AG04449 (cell line): ENCODE measurements at regions of chr3 and their contacts with region 1.

Region 1: GRCh38 chr3:150106740-150107428 is 136.2 kb upstream of the PFN2 start:
- DNase-seq: peak; percentile 98
- H3K4me3 ChIP-seq: no peak overlapping the region
- CTCF ChIP-seq: no peak

Region 2: GRCh38 chr3:150146991-150147761 is 40.3 kb after region 1 on chr3:
- CTCF ChIA-PET with region 1: no interaction called
- POLR2A ChIA-PET with region 1: interaction called, 16 read pairs
- DNase-seq: peak; percentile 69
- H3K4me3 ChIP-seq: peak overlapping the region; percentile 13; the same call in 1 of the 2 replicates
- CTCF ChIP-seq: no peak

Region 3: GRCh38 chr3:150210461-150211110 is 103.7 kb after region 1 on chr3:
- CTCF ChIA-PET with region 1: no interaction called
- POLR2A ChIA-PET with region 1: no interaction called
- DNase-seq: no peak
- H3K4me3 ChIP-seq: no peak overlapping the region
- CTCF ChIP-seq: no peak

Region 4: GRCh38 chr3:150303776-150304175 is 196.9 kb after region 1 on chr3:
- CTCF ChIA-PET with region 1: no interaction called
- POLR2A ChIA-PET with region 1: no interaction called
- DNase-seq: no peak
- H3K4me3 ChIP-seq: no peak overlapping the region
- CTCF ChIP-seq: no peak